Left cardiac atrium (tissue), 4 donors: ENCODE measurements at regions of chr16 and their contacts with region 1.

Region 1: DNA sequence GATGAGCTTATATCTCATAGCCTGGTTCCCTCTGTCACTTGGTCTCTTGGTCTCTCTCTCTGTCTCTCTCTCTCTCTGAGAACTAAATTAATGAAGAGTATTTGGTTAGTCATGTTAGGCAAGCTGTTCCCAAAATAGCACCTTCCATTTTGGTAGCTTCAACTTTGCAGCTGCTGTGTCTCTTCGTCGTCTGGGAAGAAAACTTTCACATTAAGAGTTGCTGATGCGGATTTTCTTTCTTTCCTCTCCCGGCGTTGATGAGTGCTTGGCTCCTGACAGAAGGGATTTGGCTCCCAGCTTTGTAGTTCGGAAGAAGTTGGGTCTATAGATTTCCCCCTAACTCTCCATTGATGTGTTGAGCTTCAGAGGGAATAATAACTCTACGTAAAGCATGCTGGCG is at the start of gene RBFOX1:
- DNase-seq: no peak
- ATAC-seq: peak; percentile 32 to 60
- total RNA-seq, gene RBFOX1: 46.5 to 58.1 TPM

Region 2: DNA sequence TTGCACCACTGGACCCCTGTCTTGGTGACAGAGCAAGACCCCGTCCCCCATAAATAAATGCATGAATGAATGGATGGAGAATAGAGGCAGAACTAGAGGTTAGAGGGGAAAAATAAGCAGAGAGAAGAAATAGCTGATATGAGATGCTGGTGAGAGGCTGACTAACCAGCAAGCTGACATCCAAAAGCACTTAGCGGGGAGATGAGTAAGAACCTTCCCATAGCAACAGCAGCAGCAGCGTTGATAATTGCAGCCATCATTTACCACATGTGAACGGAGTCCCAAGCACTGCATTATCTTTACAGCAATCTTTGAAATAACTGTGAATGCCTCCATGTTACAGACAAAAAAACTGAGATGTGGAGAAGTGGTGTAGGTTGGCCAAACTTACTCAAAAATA is 1457.7 kb before region 1 on chr16:
- intact Hi-C with region 1: no loop called
- DNase-seq: no peak
- ATAC-seq: no peak

Region 3: GRCh38 chr16:6937641-6938040 is 395.0 kb before region 1 on chr16:
- intact Hi-C with region 1: no loop called
- DNase-seq: no peak
- ATAC-seq: no peak

Region 4: DNA sequence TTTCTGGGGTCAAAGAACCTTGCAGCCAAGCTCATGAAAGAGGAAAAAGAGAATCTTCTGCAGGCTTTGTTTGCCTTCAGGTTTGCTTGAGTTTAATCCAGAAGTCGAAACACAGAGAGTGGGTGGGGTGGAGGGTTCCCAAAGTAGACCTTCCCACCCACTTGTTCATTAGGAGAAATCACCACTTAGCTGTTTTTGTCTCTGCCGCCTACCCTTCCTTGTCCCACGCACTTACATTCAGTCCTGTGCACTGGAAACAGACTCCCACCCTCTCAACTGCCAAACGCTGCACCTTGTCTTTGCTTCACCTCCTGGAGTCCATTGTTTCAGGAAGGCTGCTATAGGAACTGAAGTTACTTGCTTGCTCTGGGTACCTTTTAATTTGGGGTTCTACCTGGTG is 38.6 kb before region 1 on chr16:
- intact Hi-C with region 1: no loop called
- DNase-seq: no peak
- ATAC-seq: no peak

Region 5: DNA sequence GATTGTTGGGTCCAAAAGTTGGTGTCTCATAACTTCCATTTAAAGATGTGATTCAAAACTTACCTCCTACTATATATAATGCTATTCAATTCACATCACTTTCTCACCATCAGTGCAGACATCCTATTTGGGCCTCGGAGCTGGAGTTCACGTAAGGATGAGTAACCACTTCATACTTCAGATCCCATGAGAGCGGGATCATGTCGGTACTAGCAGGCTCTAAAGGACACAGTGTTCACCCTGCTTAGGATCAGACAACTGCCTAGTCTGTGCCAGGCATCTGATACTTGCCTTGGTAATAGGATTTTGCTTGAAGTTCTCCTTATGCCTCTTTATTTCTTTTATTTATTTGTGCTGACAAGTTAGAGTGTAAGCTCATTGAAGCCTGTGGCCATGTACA is 39.5 kb after region 1 on chr16:
- intact Hi-C with region 1: loop called in 1 of 2 experiments (anchors 5 kb)
- DNase-seq: no peak
- ATAC-seq: peak in 1 of 2 donors; percentile 92

Region 6: GRCh38 chr16:7456211-7456610 is 123.6 kb after region 1 on chr16:
- intact Hi-C with region 1: no loop called
- DNase-seq: no peak
- ATAC-seq: no peak